Mucosa of descending colon (tissue), 3 donors: ENCODE measurements at regions of chr19 and their contacts with region 1.

Region 1: GRCh38 chr19:16771618-16772017 is 52.0 kb downstream of the NWD1 start:
- DNase-seq: peak in 2 of 3 donors; percentile 51 to 93
- ATAC-seq: peak; percentile 89
- H3K4me3 ChIP-seq: no peak overlapping the region
- H3K4me1 ChIP-seq: no peaks in the 10 kb centered on the region
- CTCF ChIP-seq: peak; percentile 53

Region 2: DNA sequence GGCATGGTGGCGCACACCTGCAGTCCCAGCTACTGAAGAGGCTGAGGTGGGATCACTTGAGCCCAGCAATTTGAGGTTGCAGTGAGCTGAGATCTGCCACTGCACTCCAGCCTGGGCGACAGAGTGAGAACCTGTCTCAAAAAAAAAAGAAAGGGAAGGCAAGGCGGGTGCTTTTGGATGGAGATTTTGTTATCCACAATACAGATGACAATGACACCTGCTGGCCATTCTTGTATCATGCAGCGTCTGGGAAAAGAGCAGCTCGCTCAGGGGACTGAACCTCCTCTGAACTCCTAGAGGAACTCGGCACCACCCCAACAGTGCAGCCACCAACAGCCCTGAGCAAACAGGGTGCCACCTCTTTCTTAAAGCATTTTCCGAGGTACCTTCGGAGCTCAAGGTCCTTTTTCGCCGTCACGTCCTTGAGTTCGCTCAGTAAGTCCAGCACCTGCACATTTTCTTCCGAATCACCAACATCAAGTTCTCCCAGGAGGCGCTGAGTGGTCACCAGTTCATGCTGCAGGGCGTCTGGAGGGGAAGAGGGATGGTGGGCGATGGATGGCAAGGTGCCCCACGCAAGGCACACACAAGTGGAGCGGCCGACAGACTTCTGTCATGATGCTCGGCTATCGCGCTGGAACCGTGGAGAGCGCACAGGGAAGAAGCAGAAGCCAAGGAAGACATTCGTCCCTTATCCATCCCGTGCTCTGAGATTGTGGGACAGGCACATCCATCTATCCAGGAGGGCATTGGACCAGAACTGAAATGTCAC is 281.0 kb after region 1 on chr19:
- intact Hi-C with region 1: loop called in 1 of 2 experiments (anchors 5 kb)
- DNase-seq: peak in 1 of 3 donors; percentile 81
- ATAC-seq: peak; percentile 77
- H3K4me3 ChIP-seq: no peak overlapping the region
- H3K4me1 ChIP-seq: no peaks in the 10 kb centered on the region
- CTCF ChIP-seq: peak; percentile 33

Region 3: GRCh38 chr19:17090583-17090982 is 319.0 kb after region 1 on chr19:
- intact Hi-C with region 1: no loop called
- DNase-seq: no peak
- ATAC-seq: peak; percentile 42
- H3K4me3 ChIP-seq: no peak overlapping the region
- H3K4me1 ChIP-seq: peaks cover 5% of the 10 kb centered on the region
- CTCF ChIP-seq: no peak